SK-N-SH (cell line): ENCODE measurements at regions of chr5 and their contacts with region 1.

Region 1: GRCh38 chr5:157253547-157253946 is 12.4 kb upstream of the CYFIP2 start:
- DNase-seq: peak; percentile 86
- H3K4me3 ChIP-seq: no peak overlapping the region; a peak in 1 of 4 replicates
- H3K27ac ChIP-seq: no peak overlapping the region
- H3K4me1 ChIP-seq: peaks cover 0 to 9% of the 10 kb centered on the region in 2 experiments; a peak in 2 of 4 replicates
- H3K27me3 ChIP-seq: no peaks in the 10 kb centered on the region
- CTCF ChIP-seq: peak; percentile 92
- EP300 ChIP-seq: no peak
- RAD21 ChIP-seq: peak; percentile 95

Region 2: DNA sequence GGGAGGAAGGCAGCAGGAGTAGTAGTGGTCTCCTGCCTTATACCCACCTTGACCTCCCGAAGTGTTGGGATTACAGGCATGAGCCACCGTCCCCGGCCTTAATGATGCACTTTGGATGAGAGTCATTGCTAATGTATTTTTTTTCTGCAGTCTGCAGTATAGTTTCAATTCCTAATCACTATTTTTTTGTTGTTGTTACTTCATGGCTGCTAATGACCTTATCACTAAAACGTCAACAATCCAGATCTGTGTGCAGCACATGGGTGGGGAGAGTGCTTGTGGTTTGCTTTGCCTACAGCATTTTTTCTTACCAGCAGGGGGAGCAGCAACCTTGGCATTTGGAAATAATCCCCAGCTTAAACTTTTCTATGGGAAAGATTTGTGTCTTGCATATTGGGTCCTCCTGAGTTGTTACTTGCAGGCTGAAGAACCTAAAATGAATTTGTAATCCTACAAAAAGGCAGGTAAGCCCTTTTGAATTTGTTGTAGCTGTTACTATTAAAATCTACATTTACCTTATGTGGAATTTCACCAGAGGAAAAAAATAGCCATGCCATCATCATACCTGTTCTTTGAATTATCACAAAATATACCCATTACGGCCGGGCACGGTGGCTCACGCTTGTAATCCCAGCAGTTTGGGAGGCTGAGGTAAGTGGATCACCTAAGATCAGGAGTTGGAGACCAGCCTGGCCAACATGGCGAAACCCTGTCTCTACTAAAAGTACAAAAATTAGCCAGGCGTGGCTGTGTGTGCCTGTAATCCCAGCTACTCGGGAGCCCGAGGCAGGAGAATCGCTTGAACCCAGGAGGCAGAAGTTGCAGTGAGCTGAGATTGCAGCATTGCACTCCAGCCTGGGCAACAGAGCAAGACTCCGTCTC is 104.6 kb before region 1 on chr5:
- CTCF ChIA-PET with region 1: interaction called, 11 read pairs
- POLR2A ChIA-PET with region 1: no interaction called
- DNase-seq: peak; percentile 65
- H3K4me3 ChIP-seq: no peak overlapping the region; a peak in 1 of 4 replicates
- H3K27ac ChIP-seq: no peak overlapping the region
- H3K4me1 ChIP-seq: 0 out of 4 replicates have a peak, but pooled peaks cover 0 to 1% of the 10 kb centered on the region in 2 experiments
- H3K27me3 ChIP-seq: no peaks in the 10 kb centered on the region; the same call in 1 of the 2 replicates
- CTCF ChIP-seq: peak; percentile 95
- EP300 ChIP-seq: no peak
- RAD21 ChIP-seq: peak; percentile 83

Region 3: GRCh38 chr5:157265714-157266285 is 12.3 kb after region 1 on chr5 and contains the start of gene CYFIP2:
- CTCF ChIA-PET with region 1: interaction called, 63 read pairs
- POLR2A ChIA-PET with region 1: no interaction called
- DNase-seq: peak; percentile 96
- H3K4me3 ChIP-seq: peak within 1 kb of the TSS; percentile 72 to 90
- H3K27ac ChIP-seq: peak within 1 kb of the TSS in 1 of 2 experiments; percentile 65; a peak in 1 of 4 replicates
- H3K4me1 ChIP-seq: peaks cover 0 to 19% of the 10 kb centered on the region in 2 experiments; a peak in 1 of 4 replicates
- H3K27me3 ChIP-seq: peaks cover 21% of the 10 kb centered on the region
- CTCF ChIP-seq: no peak
- EP300 ChIP-seq: no peak
- RAD21 ChIP-seq: no peak
- polyA plus RNA-seq, gene CYFIP2: 20.1 and 21.3 TPM in 2 replicates

Region 4: DNA sequence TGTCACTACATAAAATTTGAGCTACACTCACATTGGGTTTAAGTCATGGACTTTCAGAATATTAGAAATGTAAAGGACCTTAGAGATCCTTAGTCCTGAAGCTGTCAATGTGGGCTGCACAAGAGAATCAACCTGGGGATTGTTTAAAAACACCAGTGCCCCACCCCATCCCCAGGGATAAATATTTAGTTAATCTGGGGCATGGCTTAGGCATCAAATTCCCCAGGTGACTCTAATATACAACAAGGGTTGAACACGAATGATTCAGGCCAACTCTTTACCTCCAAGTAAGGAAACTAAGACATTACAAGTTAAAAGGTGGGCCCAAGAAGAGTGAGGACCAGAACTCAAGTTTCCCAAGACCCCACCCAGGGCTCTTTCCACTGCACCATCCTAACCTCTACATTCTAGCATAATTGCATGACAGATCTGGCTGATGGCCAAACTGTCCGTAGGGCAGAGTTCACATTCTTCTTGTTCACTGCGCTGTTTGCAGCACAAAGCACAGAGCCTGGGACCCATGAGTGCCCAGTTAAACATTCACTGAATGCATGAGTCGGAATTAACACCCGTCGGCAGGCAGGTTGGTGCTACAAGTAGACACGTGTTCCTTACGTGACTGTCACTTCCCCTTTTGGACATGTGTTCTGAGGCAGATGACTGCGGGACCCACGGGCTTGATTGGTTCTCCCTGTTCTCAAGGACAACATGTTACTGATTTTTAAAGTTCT is 37.6 kb after region 1 on chr5:
- CTCF ChIA-PET with region 1: interaction called, 12 read pairs
- POLR2A ChIA-PET with region 1: no interaction called
- DNase-seq: no peak
- H3K4me3 ChIP-seq: no peak overlapping the region
- H3K27ac ChIP-seq: no peak overlapping the region
- H3K4me1 ChIP-seq: peaks cover 0 to 13% of the 10 kb centered on the region in 2 experiments; a peak in 1 of 4 replicates
- H3K27me3 ChIP-seq: no peaks in the 10 kb centered on the region
- CTCF ChIP-seq: no peak
- EP300 ChIP-seq: no peak
- RAD21 ChIP-seq: no peak

Region 5: DNA sequence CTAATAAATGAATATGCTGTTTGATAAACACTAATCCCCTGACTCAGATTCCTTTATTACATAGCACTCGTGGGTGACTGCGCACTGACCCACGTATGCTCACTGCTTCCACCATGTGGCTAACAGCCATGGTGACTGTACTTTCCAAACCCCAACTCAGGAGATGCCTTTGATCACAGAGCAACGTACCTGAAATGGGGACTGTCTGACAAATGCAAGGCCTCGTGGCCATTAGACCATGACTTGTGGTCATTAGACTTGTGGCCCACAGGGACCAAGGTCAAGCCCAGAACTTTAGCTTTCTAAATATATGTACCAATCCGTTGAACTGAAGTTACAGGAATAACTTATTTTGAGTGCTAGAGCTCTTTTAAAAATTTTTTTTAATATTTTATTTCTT is 58.9 kb after region 1 on chr5:
- CTCF ChIA-PET with region 1: interaction called, 48 read pairs
- POLR2A ChIA-PET with region 1: no interaction called
- DNase-seq: peak; percentile 82
- H3K4me3 ChIP-seq: no peak overlapping the region; a peak in 1 of 4 replicates
- H3K27ac ChIP-seq: no peak overlapping the region
- H3K4me1 ChIP-seq: peaks cover 0 to 3% of the 10 kb centered on the region in 2 experiments; a peak in 1 of 4 replicates
- H3K27me3 ChIP-seq: no peaks in the 10 kb centered on the region
- CTCF ChIP-seq: peak; percentile 80
- EP300 ChIP-seq: no peak
- RAD21 ChIP-seq: peak; percentile 76

Region 6: DNA sequence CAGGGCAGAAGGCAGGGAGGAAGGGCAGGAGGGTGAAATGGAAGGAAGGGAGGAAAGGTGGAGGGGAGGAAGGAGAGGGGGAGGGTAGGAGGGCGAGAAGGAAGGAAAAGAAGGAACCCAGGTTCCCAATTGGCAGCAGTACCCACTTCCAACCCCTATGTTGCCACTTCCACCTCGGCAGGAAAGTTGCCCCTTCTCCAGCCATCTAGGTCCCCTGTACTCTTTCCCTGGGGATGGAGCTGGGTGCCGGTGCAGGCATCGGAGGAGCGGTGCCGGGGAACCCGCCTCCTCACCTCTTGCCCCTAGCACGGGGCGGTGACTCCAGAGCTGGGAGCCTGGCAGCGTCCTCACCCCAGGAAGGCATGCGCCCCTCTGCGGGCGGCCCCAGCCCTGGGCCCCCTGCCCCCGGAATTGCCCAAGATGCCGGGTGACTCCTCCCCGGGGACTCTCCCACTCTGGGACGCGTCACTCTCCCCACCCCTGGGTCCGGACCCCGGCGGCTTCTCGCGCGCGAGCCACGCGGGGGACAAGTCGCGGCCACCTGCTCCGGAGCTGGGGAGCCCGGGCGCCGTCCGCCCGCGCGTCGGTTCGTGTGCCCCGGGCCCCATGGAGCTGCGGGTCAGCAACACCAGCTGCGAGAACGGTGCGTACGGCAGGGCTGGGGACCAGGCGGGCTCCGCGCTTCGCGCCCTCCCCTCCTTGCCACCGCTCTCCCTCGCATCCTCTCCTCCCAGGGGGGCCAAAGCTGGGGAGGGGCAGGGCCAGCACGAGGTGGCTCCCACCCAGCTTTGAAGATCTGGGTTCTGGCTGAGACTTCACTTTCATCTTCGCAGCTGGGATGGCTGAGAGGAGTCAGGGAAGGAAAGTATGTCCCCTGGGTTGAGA is 206.4 kb after region 1 on chr5 and contains the start of gene NIPAL4:
- CTCF ChIA-PET with region 1: interaction called, 10 read pairs
- POLR2A ChIA-PET with region 1: no interaction called
- DNase-seq: peak; percentile 77
- H3K4me3 ChIP-seq: peak within 1 kb of the TSS; percentile 62 to 65
- H3K27ac ChIP-seq: no peak within 1 kb of the TSS
- H3K4me1 ChIP-seq: peaks cover 11 to 13% of the 10 kb centered on the region in 2 experiments; a peak in 3 of 4 replicates
- H3K27me3 ChIP-seq: no peaks in the 10 kb centered on the region
- CTCF ChIP-seq: no peak
- EP300 ChIP-seq: no peak
- RAD21 ChIP-seq: no peak
- polyA plus RNA-seq, gene NIPAL4: 2.3 and 2.6 TPM in 2 replicates